Left ventricle myocardium inferior (tissue), 1 donor: ENCODE measurements at regions of chr6 and their contacts with region 1.

Region 1: GRCh38 chr6:43769526-43770416 is at the start of gene VEGFA:
- DNase-seq: peak; percentile 91
- H3K4me3 ChIP-seq: peak within 1 kb of the TSS; percentile 95
- H3K27ac ChIP-seq: peak within 1 kb of the TSS; percentile 98
- H3K4me1 ChIP-seq: peaks cover 67% of the 10 kb centered on the region
- H3K27me3 ChIP-seq: no peaks in the 10 kb centered on the region
- CTCF ChIP-seq: peak; percentile 98
- total RNA-seq, gene VEGFA: 359 TPM

Region 2: GRCh38 chr6:43361269-43361668 is 408.5 kb before region 1 on chr6:
- intact Hi-C with region 1: no loop called
- DNase-seq: no peak
- H3K4me3 ChIP-seq: no peak overlapping the region
- H3K27ac ChIP-seq: no peak overlapping the region
- H3K4me1 ChIP-seq: peaks cover 2% of the 10 kb centered on the region
- H3K27me3 ChIP-seq: no peaks in the 10 kb centered on the region
- CTCF ChIP-seq: no peak

Region 3: DNA sequence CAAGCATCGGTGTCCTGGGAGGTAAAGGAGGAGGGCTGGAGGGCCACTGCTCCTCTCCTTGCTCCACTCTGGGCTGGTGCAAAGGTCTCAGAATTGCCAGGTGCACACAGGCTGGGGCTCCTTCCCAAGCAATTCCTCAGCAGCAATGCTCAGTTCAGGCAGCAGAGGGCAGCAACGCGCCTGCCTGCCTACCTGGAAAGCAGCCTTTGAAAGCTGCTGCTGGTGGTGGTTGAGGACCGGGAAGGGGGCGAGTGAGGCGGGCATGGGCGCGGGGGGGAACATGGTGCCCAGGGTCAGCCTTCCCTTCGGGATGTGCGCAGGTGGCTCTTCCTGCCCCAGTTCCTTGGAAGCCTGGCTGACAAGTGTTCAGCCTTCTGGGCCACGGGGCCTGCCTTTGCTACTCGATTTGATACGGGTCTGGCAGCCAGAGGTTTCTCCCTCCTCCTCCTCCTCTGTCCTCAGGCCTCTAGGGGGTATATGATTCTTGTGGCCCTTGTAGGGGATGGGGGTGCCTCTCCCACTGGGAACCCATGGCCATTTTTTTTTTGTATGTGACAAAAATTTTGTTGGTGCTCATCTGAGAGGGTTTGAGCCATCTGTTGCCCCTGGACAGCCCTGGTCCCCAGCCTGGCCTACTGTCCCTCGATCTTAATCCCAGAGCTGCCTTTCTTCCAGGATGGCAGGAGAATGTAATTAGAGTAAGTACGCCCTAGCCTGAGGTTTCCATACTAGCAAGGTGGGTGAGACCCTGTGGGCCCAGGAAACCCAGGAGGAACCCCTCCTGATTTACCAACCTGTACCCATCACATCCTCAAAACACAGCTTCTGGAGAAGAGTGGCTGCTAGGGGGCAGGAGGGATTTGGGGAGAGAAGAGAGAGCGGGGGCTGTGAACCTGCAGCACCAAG is 102.3 kb before region 1 on chr6:
- intact Hi-C with region 1: loop called (anchors 10 kb)
- DNase-seq: peak; percentile 84
- H3K4me3 ChIP-seq: peak overlapping the region; percentile 44
- H3K27ac ChIP-seq: peak overlapping the region; percentile 89
- H3K4me1 ChIP-seq: peaks cover 56% of the 10 kb centered on the region
- H3K27me3 ChIP-seq: no peaks in the 10 kb centered on the region
- CTCF ChIP-seq: peak; percentile 98

Region 4: DNA sequence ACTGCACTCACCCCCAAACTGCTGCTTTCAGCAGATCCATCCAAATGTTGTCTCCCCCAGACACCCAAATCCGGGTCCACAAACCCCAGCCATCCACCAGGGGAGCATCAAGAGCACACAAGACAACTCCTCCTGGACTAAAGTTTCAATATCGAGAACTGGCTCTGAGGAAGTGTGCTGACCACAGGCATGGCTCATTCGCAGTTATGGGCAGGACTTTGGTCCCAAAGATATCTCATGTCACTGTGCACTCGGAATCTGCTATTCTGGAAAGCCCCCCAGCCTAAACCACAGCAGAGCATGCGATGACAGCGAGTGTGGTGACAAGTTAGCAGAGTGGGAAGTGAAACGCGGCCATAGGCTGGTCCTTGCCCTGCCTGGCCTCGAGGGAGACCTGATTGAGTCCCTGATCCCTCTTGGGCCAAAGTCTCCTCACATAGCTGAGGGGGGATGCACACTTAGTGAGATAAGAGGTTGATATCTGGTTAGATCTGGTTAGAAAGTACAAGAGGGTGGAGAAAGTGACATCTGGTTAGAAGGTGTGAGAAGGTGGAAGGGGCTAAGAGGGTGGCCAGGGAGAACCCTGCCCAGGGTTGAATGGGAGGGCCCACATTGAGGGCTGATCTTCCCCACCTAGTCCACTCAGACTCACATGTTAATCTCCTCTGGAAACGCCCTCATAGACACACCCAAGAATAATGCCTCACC is 207.8 kb after region 1 on chr6:
- intact Hi-C with region 1: no loop called
- DNase-seq: no peak
- H3K4me3 ChIP-seq: no peak overlapping the region
- H3K27ac ChIP-seq: no peak overlapping the region
- H3K4me1 ChIP-seq: peaks cover 21% of the 10 kb centered on the region
- H3K27me3 ChIP-seq: no peaks in the 10 kb centered on the region
- CTCF ChIP-seq: no peak